K562 (cell line): ENCODE measurements at regions of chr9 and their contacts with region 1.

Region 1: DNA sequence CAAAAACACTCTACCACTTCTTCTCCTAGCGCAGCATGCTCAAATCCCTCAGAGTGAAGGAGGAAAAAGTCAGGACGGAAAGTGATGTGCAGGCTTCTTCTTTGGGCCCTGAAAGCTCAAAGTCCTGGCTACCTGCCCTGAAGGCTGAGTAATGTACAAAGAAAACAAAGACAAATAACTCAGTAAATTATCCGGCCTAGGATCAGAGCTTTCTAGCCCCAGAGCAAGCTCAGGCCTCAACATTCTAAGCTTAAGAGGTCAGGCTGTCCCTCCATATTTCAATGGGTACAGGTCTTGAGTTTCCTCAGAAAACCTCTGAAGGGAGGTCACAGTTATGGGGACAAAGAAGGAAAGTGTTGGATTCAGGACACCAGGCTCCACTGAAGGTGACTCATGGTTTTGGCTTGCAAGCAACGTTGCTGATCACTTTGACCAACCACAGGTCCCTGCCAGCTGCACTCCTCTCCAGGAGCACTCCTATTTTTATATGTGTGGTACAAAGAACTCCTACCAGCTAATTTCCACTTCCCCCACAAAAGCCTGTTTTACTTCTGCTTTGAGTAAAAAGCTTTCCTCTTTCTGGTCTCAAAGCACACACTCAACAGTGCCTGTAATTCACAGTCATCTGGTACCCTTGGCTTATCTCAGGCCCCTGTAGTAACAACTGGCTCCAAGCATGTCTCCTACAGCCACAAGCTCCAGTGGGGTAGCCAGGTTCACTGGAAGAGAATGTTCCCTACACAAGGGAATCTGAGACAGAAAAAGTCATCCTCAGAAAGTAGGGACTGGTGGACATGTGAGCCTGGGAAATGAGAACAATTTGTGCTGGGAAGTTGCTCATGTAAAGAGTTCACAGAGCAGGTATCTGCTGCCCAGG is 115.7 kb downstream of the UGCG start:
- DNase-seq: peak in 2 of 4 experiments; percentile 19 to 30
- ATAC-seq: peak; percentile 75
- H3K4me3 ChIP-seq: no peak overlapping the region
- H3K27ac ChIP-seq: no peak overlapping the region
- H3K4me1 ChIP-seq: peaks cover 4 to 23% of the 10 kb centered on the region in 2 experiments; a peak in 4 of 5 replicates
- H3K27me3 ChIP-seq: no peaks in the 10 kb centered on the region
- CTCF ChIP-seq: no peak
- EP300 ChIP-seq: no peak
- POLR2A ChIP-seq: no peak
- RAD21 ChIP-seq: no peak

Region 2: GRCh38 chr9:112033237-112034215 is 21.3 kb after region 1 on chr9:
- CTCF ChIA-PET with region 1: no interaction called
- POLR2A ChIA-PET with region 1: interaction called, 10 read pairs
- in situ Hi-C with region 1: no loop called
- intact Hi-C with region 1: no loop called
- DNase-seq: no peak
- ATAC-seq: no peak
- H3K4me3 ChIP-seq: no peak overlapping the region
- H3K27ac ChIP-seq: no peak overlapping the region
- H3K4me1 ChIP-seq: peaks cover 15 to 18% of the 10 kb centered on the region in 2 experiments; a peak in 4 of 5 replicates
- H3K27me3 ChIP-seq: no peaks in the 10 kb centered on the region
- CTCF ChIP-seq: no peak
- EP300 ChIP-seq: no peak
- POLR2A ChIP-seq: no peak
- RAD21 ChIP-seq: no peak

Region 3: DNA sequence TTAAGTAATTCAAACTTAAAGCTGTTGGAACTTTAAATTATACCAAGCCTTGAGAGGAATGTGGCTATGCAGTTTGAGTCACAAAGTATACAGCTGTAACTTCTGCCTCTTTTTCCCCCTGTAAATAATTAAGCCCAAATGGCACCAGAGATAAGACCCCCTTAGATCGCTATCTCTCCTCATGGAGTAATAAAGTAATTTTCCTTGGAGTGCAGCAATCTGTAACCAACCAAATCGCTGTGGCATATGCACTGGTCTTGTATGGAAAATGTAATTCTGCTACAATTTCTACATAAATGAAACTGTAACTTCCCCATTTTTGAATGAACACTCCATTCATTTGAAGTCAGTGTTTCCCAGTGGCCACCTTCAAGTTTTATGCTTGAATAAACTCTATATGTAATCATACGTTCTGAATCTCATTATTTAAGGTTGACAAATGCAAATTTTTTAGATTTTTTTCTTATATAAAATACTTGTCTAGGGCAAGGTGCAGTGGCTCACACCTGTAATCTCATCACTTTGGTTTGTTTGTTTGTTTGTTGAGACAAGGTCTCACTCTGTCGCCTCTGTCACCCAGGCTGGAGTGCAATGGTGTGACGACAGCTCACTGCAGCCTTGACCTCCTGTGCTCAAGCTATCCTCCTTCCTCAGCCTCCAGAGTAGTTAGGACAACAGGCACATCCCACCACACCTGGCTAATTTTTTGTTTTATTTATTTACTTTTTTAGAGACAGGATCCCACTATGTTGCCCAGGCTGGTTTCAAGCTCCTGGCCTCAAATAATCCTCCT is 150.6 kb after region 1 on chr9:
- CTCF ChIA-PET with region 1: no interaction called
- POLR2A ChIA-PET with region 1: no interaction called
- in situ Hi-C with region 1: no loop called
- intact Hi-C with region 1: no loop called
- DNase-seq: no peak
- ATAC-seq: no peak
- H3K4me3 ChIP-seq: no peak overlapping the region
- H3K27ac ChIP-seq: no peak overlapping the region
- H3K4me1 ChIP-seq: peaks cover 0 to 13% of the 10 kb centered on the region in 2 experiments; a peak in 2 of 5 replicates
- H3K27me3 ChIP-seq: no peaks in the 10 kb centered on the region
- CTCF ChIP-seq: no peak
- EP300 ChIP-seq: no peak
- POLR2A ChIP-seq: no peak
- RAD21 ChIP-seq: no peak

Region 4: GRCh38 chr9:112462855-112463254 is 450.6 kb after region 1 on chr9:
- CTCF ChIA-PET with region 1: no interaction called
- POLR2A ChIA-PET with region 1: no interaction called
- in situ Hi-C with region 1: no loop called
- intact Hi-C with region 1: no loop called
- DNase-seq: no peak
- ATAC-seq: no peak
- H3K4me3 ChIP-seq: no peak overlapping the region
- H3K27ac ChIP-seq: no peak overlapping the region
- H3K4me1 ChIP-seq: peaks cover 6 to 10% of the 10 kb centered on the region in 2 experiments
- H3K27me3 ChIP-seq: no peaks in the 10 kb centered on the region
- CTCF ChIP-seq: no peak
- EP300 ChIP-seq: no peak
- POLR2A ChIP-seq: no peak
- RAD21 ChIP-seq: no peak